Activated T-helper 2 cell treated with anti-CD3 and anti-CD28 coated beads, Interferon-gamma antibody, Interleukin-2, Interleukin-4, amounts not matched to agents 10 μg/mL and 5 μg/mL and 100 μg/mL, durations not matched to agents 14 hours and 24 hours and 36 hours (primary cell): ENCODE measurements at regions of chr14 and their contacts with region 1.

Region 1: GRCh38 chr14:60734465-60735242 is at the start of gene MNAT1:
- DNase-seq: peak; percentile 70
- H3K4me3 Mint-ChIP-seq: peak within 1 kb of the TSS; percentile 99
- H3K27ac Mint-ChIP-seq: peak within 1 kb of the TSS; percentile 83
- H3K4me1 Mint-ChIP-seq: peaks cover 23% of the 10 kb centered on the region
- H3K27me3 Mint-ChIP-seq: peaks cover 32% of the 10 kb centered on the region
- total RNA-seq, gene MNAT1: 56.2 and 57.5 TPM in 2 replicates

Region 2: DNA sequence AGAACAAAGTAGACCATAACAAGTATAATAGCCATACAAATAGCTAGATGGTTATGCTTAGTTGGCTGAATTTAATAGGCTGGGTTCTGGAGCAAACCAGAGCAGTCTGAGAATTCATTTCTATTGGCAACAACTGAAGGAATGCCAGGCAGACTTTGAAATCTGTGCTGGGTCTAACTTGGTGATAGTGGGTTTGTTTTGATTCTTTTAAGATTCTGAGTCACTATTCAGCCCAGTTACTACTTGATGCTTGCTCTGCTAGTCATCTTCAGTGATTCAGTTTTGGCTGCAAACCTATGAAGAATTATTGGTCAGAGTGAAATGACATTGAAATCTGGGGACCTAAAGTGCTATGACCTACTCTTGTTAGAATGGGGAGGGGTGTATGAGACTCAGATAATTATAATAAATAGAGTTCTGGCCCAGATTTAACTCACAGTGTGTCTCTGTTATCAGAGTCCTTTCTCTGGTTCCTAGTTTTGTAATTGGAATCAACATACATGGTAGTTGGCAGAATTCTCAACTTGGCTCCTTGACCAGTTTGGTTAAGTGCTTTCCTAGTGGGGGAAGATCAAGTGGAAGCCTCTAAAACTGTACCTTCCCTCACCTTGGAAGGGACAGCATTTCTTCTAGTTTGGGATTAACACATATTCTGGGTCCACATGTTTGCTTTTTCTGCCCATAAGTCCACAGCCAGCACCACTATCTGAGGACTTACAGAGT is 43.4 kb after region 1 on chr14:
- intact Hi-C with region 1: loop called (anchors 1 kb)
- DNase-seq: no peak
- H3K4me3 Mint-ChIP-seq: no peak overlapping the region
- H3K27ac Mint-ChIP-seq: no peak overlapping the region
- H3K4me1 Mint-ChIP-seq: peaks cover 21% of the 10 kb centered on the region
- H3K27me3 Mint-ChIP-seq: no peaks in the 10 kb centered on the region

Region 3: GRCh38 chr14:60805841-60806569 is 71.4 kb after region 1 on chr14:
- intact Hi-C with region 1: no loop called
- DNase-seq: no peak
- H3K4me3 Mint-ChIP-seq: no peak overlapping the region
- H3K27ac Mint-ChIP-seq: no peak overlapping the region
- H3K4me1 Mint-ChIP-seq: peaks cover 8% of the 10 kb centered on the region
- H3K27me3 Mint-ChIP-seq: no peaks in the 10 kb centered on the region